ENCODE measurements at regions of chr10 and their contacts with region 1.

Region 1: DNA sequence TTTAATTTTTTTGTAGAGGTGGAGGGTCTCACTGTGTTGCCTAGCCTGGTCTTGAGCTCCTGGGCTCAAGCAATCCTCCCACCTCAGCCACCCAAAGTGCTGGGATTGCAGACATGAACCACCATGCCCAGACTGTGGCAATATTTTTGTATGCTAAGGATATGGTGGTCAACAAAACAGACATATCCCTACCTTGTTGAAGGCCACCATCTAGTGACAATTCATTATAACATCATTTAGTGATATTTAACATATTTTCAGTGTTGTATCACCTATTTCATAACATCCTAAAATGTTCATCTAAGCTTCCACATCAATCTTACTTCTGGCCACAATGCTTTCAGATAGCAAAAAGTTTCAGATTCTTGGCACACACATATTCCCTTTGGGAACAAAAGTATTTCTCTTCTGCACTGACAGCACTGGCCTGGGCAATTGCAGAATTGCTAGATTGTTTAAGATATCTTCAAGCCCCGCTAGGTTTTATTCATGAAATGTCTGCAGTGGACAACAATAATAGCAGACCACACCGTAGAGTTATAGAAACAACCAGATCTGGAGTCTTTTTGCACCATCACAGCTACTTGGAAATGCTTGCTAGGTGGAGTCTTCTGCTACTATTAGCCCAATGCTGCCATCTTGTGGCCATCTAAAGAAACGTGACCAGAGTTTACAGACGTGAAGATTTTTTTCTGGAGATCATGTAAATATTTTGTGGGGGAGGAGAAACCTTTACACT is 58.4 kb downstream of the DNAJC12 start:
- H3K4me3 Mint-ChIP-seq: no peak overlapping the region
- H3K27ac Mint-ChIP-seq: no peak overlapping the region
- H3K4me1 Mint-ChIP-seq: peaks cover 25% of the 10 kb centered on the region
- H3K27me3 Mint-ChIP-seq: no peaks in the 10 kb centered on the region

Region 2: DNA sequence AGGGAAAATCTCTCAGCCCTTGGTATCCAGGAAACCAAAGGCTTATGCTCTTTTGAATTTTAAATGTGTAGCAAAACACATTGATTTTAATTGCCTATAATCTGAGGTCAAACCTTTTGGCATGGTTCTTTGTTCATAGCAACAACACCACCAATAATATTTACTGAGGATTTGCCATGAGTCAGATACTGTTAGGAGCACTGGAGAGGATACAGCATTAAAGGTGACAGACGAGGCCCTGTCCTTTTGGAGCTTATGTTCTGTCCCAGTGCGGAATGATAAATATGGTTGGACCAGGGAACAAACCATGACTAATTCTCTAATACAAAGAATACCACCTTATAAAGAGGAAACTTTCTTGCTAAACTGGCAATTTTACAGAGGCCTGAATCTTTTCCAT is 260.2 kb before region 1 on chr10:
- intact Hi-C with region 1: no loop called
- H3K4me3 Mint-ChIP-seq: no peak overlapping the region
- H3K27ac Mint-ChIP-seq: no peak overlapping the region
- H3K4me1 Mint-ChIP-seq: no peaks in the 10 kb centered on the region
- H3K27me3 Mint-ChIP-seq: no peaks in the 10 kb centered on the region

Region 3: DNA sequence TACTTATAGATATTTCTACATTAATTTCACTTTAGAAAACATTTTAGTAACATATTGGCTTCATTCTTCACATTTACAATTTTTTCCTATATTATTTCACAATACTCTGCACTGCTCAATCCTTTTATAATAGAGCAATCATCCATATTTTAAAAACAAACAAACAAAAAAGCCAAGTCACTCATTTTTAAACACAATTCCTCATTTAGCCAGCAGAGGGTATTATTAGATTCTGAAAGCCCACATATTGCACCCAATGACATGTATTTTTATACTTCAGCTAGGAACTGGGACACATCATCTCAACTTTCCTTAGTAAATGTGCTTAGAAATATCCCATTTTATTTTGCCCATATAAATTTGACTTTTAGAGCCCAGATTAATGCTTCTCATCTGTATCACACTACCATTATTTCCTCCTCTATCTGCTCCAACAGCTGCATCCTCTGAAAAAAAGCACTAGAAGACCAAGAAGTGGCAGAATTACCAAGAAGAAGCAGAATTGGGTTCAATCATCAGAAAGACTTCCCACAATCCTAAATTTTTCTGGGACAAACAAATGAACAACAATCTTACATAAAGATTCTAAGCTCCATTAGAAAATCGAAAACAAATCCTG is 113.1 kb before region 1 on chr10:
- intact Hi-C with region 1: loop called (anchors 1 kb)
- H3K4me3 Mint-ChIP-seq: no peak overlapping the region
- H3K27ac Mint-ChIP-seq: no peak overlapping the region
- H3K4me1 Mint-ChIP-seq: no peaks in the 10 kb centered on the region
- H3K27me3 Mint-ChIP-seq: no peaks in the 10 kb centered on the region

Region 4: DNA sequence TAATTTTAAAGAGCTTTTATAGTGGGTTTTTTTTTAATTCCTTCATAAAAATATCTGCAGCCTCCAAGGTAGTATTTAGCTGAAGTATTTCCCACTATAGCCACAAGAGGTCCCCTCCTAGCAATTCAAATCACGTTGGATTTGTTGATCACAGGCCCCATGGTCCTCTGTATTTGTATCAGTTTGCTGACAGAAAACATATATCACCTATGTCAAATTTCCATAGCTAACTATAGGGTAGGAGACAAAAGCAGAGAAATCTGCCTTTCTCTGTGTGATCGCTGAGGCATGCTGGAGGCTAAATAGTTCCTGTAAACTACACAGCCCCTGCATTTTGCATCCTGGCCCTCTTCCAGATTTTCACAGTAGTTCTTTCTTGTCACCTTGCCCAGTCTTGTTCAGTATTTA is 81.9 kb before region 1 on chr10:
- intact Hi-C with region 1: loop called (anchors 1 kb)
- H3K4me3 Mint-ChIP-seq: no peak overlapping the region
- H3K27ac Mint-ChIP-seq: no peak overlapping the region
- H3K4me1 Mint-ChIP-seq: no peaks in the 10 kb centered on the region
- H3K27me3 Mint-ChIP-seq: peaks cover 19% of the 10 kb centered on the region

Measured in dendritic cell treated with granulocyte-macrophage colony-stimulating factor and Interleukin-4, amounts not matched to agents 40 ng/mL and 50 ng/mL, for 4 days (primary cell).